HepG2 (cell line): ENCODE measurements at regions of chr2 and their contacts with region 1.

Region 1: DNA sequence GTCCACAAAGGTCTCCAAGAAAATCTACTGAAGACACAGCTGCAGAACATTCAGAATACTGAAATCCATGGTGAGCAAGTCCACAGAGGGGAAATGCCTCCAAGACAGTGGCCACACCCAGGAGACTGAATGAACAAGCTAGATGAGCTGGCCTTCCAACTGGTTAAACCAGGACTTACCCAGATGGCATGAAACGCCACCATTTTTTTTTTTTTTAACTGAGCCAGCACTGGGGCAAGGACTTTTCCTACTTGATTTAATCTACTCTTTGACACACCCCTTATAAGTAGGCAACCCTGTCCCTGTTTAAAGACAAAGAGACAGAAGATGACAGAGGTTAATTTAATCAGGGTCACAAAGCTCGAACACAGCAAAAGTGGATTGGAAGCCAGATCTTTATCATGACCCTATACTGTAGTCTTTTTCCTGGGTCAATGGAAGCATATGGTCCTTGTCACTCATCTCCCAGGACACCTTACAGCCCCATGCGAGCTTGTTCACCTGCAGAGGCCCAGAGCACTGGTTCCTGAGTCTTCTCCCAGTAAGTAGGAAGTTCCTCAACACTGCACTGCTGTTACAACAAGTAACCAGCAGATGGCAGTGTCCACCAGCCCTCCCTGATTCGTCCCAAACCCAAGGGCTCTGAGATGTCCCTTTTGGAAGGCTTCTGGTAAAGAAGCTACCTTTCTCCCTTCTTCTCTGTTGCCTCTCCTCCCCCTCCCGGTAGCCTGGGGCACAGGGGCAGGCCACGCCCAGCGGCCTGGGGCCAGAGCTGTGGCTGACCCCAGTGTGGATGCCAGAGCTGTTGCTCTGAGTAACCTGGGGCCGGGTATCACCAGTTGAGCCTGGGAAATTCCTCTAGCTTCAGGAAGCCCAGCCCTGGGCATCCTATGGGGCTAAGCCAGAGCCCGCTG is 5.6 kb upstream of the GDF7 start:
- DNase-seq: peak; percentile 78
- ATAC-seq: peak; percentile 38
- H3K4me3 ChIP-seq: peak overlapping the region in 1 of 3 experiments; percentile 15; a peak in 1 of 6 replicates
- H3K27ac ChIP-seq: no peak overlapping the region
- H3K4me1 ChIP-seq: peaks cover 38% of the 10 kb centered on the region
- H3K27me3 ChIP-seq: peaks cover 26 to 66% of the 10 kb centered on the region in 2 experiments; a peak in 4 of 5 replicates
- CTCF ChIP-seq: peak; percentile 99
- EP300 ChIP-seq: no peak
- POLR2A ChIP-seq: no peak
- RAD21 ChIP-seq: peak; percentile 97

Region 2: GRCh38 chr2:21165350-21165749 is 504.0 kb after region 1 on chr2:
- CTCF ChIA-PET with region 1: no interaction called
- POLR2A ChIA-PET with region 1: no interaction called
- in situ Hi-C with region 1: loop called (anchors 10 kb)
- intact Hi-C with region 1: loop called (anchors 5 kb)
- DNase-seq: peak; percentile 42
- ATAC-seq: 0 out of 3 replicates have a peak, but pooled peaks have one; percentile 36
- H3K4me3 ChIP-seq: no peak overlapping the region
- H3K27ac ChIP-seq: no peak overlapping the region
- H3K4me1 ChIP-seq: no peaks in the 10 kb centered on the region
- H3K27me3 ChIP-seq: no peaks in the 10 kb centered on the region
- CTCF ChIP-seq: peak; percentile 57
- EP300 ChIP-seq: no peak
- POLR2A ChIP-seq: no peak
- RAD21 ChIP-seq: peak; percentile 40; the same call in 1 of the 2 replicates

Region 3: GRCh38 chr2:21317131-21317530 is 655.8 kb after region 1 on chr2:
- CTCF ChIA-PET with region 1: no interaction called
- POLR2A ChIA-PET with region 1: no interaction called
- in situ Hi-C with region 1: no loop called
- intact Hi-C with region 1: loop called (anchors 10 kb)
- DNase-seq: peak; percentile 60
- ATAC-seq: peak; percentile 92
- H3K4me3 ChIP-seq: no peak overlapping the region
- H3K27ac ChIP-seq: no peak overlapping the region
- H3K4me1 ChIP-seq: no peaks in the 10 kb centered on the region
- H3K27me3 ChIP-seq: peaks cover 0 to 10% of the 10 kb centered on the region in 2 experiments; a peak in 3 of 5 replicates
- CTCF ChIP-seq: peak; percentile 73
- EP300 ChIP-seq: no peak
- POLR2A ChIP-seq: no peak
- RAD21 ChIP-seq: peak; percentile 42; the same call in 1 of the 2 replicates